CD4-positive, alpha-beta T cell (primary cell): ENCODE measurements at regions of chr17 and their contacts with region 1.

Region 1: DNA sequence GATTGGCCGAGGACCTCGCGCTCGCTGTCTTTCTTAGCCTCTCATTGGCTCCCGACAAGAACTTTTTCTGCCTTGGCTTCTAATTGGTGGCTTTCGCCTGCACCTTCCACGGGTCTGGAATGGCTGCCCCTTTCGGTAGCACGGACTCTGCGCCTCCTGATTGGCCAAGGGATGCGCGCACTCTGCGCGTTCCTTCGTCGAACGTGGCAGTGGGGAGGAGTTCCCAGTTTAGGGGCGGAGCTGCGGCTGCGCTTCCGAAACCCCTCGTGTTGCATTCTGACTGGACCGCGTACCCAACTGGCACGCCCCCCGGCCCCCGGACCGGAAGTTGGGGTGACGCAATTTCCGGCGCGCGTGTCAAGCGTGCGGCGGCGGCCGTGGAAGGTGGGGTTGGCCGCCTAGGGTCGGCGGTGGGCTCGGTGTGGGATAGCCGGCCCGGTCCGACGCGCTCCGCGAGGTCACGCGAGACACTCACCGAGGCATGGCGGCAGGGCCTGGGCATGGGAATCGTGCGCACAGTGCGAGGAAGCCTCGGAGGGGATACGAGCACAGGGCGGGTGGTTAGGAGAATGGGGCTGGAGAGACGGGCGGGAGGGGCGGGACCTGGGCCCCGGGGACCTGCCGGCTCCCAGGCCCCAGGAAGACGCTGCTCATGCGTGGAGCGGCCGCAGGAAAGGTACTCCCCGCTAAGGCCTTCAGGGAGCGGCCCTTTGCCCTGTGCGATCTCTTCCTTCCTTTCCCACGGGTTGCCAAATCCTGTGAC is 602 bp upstream of the P4HB start:
- DNase-seq: peak; percentile 98 to 100 (median 99)
- ATAC-seq: peak; percentile 86
- H3K4me3 ChIP-seq: peak overlapping the region; percentile 63
- H3K4me3 Mint-ChIP-seq: peak overlapping the region; percentile 94
- H3K27ac ChIP-seq: peak overlapping the region; percentile 93 to 95
- H3K27ac Mint-ChIP-seq: peak overlapping the region; percentile 96
- H3K4me1 ChIP-seq: peaks cover 60% of the 10 kb centered on the region
- H3K4me1 Mint-ChIP-seq: peaks cover 29% of the 10 kb centered on the region
- H3K27me3 ChIP-seq: no peaks in the 10 kb centered on the region
- H3K27me3 Mint-ChIP-seq: no peaks in the 10 kb centered on the region
- CTCF ChIP-seq: no peak

Region 2: GRCh38 chr17:81512560-81513371 is 348.2 kb before region 1 on chr17 and contains the start of gene ACTG1:
- CTCF ChIA-PET with region 1: no interaction called
- POLR2A ChIA-PET with region 1: interaction called, 4 read pairs
- intact Hi-C with region 1: loop called in 1 of 2 experiments (anchors 10 kb)
- DNase-seq: peak; percentile 84 to 96 (median 92)
- ATAC-seq: peak; percentile 66
- H3K4me3 ChIP-seq: peak within 1 kb of the TSS; percentile 98
- H3K4me3 Mint-ChIP-seq: peak within 1 kb of the TSS; percentile 99
- H3K27ac ChIP-seq: peak within 1 kb of the TSS; percentile 72 to 87
- H3K27ac Mint-ChIP-seq: peak within 1 kb of the TSS; percentile 90
- H3K4me1 ChIP-seq: peaks cover 72% of the 10 kb centered on the region
- H3K4me1 Mint-ChIP-seq: peaks cover 57% of the 10 kb centered on the region
- H3K27me3 ChIP-seq: no peaks in the 10 kb centered on the region
- H3K27me3 Mint-ChIP-seq: no peaks in the 10 kb centered on the region
- CTCF ChIP-seq: no peak
- total RNA-seq, gene ACTG1: 1,296 to 1,318 TPM

Region 3: GRCh38 chr17:81683584-81684237 is 177.2 kb before region 1 on chr17 and contains the starts of genes ARL16 and HGS:
- CTCF ChIA-PET with region 1: no interaction called
- POLR2A ChIA-PET with region 1: interaction called, 7 read pairs
- intact Hi-C with region 1: loop called (anchors 5 kb)
- DNase-seq: peak; percentile 94 to 99 (median 96)
- ATAC-seq: peak; percentile 99
- H3K4me3 ChIP-seq: peak within 1 kb of the TSS; percentile 98
- H3K4me3 Mint-ChIP-seq: peak within 1 kb of the TSS; percentile 100
- H3K27ac ChIP-seq: peak within 1 kb of the TSS; percentile 67 to 69
- H3K27ac Mint-ChIP-seq: peak within 1 kb of the TSS; percentile 81
- H3K4me1 ChIP-seq: peaks cover 51% of the 10 kb centered on the region
- H3K4me1 Mint-ChIP-seq: peaks cover 24% of the 10 kb centered on the region
- H3K27me3 ChIP-seq: no peaks in the 10 kb centered on the region
- H3K27me3 Mint-ChIP-seq: no peaks in the 10 kb centered on the region
- CTCF ChIP-seq: no peak
- total RNA-seq, gene ARL16: 35.7 to 38.5 TPM
- total RNA-seq, gene HGS: 118 to 127 TPM

Region 4: DNA sequence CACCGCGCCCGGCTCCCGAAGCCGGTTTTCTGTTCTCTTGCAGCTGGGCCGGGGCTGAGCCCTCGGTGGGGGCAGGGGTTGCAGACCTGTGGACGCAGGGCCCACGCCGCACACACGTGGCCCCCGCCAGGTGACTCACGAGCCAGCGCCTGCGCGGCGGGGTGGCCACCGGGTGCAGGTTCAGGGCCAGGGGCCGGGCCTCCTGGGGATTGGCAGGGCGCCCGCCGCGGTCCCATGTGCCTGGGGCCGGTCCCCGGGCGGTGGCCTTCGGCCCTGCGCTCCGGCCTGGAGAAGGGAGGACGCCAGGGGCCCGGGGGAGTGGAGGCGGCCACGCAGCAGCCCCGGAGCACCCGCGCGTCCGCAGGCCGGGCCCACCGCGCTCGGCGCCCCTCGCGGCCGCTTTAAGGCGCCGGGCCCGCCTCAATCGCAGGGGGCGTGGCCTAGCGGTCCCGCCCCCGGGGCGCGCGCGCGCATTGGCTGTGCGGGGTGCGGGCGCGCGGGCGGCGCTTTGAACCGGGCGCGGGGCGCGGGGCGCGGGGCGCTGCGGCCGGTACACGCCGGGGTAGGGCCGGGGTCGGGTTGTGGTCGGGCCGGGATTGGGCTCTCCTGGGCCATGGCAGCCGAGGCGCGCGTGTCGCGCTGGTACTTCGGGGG is 149.0 kb before region 1 on chr17 and contains the start of gene SLC25A10:
- CTCF ChIA-PET with region 1: no interaction called
- POLR2A ChIA-PET with region 1: no interaction called
- intact Hi-C with region 1: loop called in 1 of 2 experiments (anchors 2 kb)
- DNase-seq: peak; percentile 53 to 91 (median 72)
- ATAC-seq: peak; percentile 80
- H3K4me3 ChIP-seq: peak within 1 kb of the TSS; percentile 49
- H3K4me3 Mint-ChIP-seq: peak within 1 kb of the TSS; percentile 90
- H3K27ac ChIP-seq: no peak within 1 kb of the TSS
- H3K27ac Mint-ChIP-seq: peak within 1 kb of the TSS; percentile 77
- H3K4me1 ChIP-seq: peaks cover 31% of the 10 kb centered on the region
- H3K4me1 Mint-ChIP-seq: peaks cover 27% of the 10 kb centered on the region
- H3K27me3 ChIP-seq: no peaks in the 10 kb centered on the region
- H3K27me3 Mint-ChIP-seq: no peaks in the 10 kb centered on the region
- CTCF ChIP-seq: peak; percentile 17
- total RNA-seq, gene SLC25A10: 4.6 TPM

Region 5: DNA sequence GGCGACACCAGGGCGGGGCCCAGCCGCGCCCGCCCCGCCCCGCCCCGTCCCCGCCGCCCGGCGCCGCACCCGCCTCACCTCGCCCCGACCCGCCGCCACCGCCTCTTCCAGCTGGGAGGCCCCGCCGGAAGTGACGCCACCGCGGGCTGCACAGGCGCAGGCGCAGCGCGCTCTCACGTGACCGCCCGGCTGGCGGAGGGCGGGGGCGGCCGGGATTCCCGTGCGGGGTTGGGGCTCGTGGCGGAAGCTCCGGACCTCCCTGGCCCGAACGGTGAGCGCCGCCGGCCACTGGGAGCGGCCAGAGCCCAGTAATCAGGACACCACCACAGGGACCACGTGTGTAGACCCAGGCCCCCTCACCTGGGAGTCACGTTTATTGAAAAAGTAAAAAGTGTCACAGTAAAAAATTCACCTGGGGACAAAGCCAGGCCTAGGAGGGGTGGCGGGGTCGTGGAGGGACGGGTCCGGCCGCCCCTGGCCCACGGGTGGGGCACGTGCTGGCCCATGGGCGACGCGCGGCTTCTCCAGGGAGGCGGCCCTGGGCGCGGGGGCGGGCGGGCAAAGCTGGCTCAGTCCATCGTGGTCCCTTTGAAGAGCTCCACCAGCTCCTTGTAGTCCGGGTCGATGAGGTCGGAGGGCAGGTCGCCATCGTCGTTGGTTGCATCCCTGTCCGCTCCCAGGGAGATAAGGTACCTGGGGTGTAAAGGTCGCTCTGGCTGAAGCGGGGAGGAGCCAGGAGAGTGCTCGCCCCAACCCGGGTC is 27.6 kb before region 1 on chr17 and contains the start of gene MCRIP1:
- CTCF ChIA-PET with region 1: no interaction called
- POLR2A ChIA-PET with region 1: interaction called, 7 read pairs
- intact Hi-C with region 1: loop called (anchors 1 to 2 kb)
- DNase-seq: peak; percentile 82 to 98 (median 92)
- ATAC-seq: peak; percentile 78
- H3K4me3 ChIP-seq: peak within 1 kb of the TSS; percentile 80
- H3K4me3 Mint-ChIP-seq: peak within 1 kb of the TSS; percentile 93
- H3K27ac ChIP-seq: peak within 1 kb of the TSS; percentile 72 to 91
- H3K27ac Mint-ChIP-seq: peak within 1 kb of the TSS; percentile 88
- H3K4me1 ChIP-seq: peaks cover 28% of the 10 kb centered on the region
- H3K4me1 Mint-ChIP-seq: peaks cover 19% of the 10 kb centered on the region
- H3K27me3 ChIP-seq: no peaks in the 10 kb centered on the region
- H3K27me3 Mint-ChIP-seq: no peaks in the 10 kb centered on the region
- CTCF ChIP-seq: no peak
- total RNA-seq, gene MCRIP1: 36.9 to 37.7 TPM

Region 6: GRCh38 chr17:81911277-81911961 is 50.5 kb after region 1 on chr17 and contains the start of gene PCYT2:
- CTCF ChIA-PET with region 1: no interaction called
- POLR2A ChIA-PET with region 1: interaction called, 5 read pairs
- intact Hi-C with region 1: loop called in 1 of 2 experiments (anchors 1 kb)
- DNase-seq: peak; percentile 89 to 97 (median 93)
- ATAC-seq: peak; percentile 97
- H3K4me3 ChIP-seq: peak within 1 kb of the TSS; percentile 72
- H3K4me3 Mint-ChIP-seq: peak within 1 kb of the TSS; percentile 92
- H3K27ac ChIP-seq: peak within 1 kb of the TSS in 1 of 2 donors; percentile 29
- H3K27ac Mint-ChIP-seq: peak within 1 kb of the TSS; percentile 73
- H3K4me1 ChIP-seq: peaks cover 33% of the 10 kb centered on the region
- H3K4me1 Mint-ChIP-seq: peaks cover 11% of the 10 kb centered on the region
- H3K27me3 ChIP-seq: no peaks in the 10 kb centered on the region
- H3K27me3 Mint-ChIP-seq: no peaks in the 10 kb centered on the region
- CTCF ChIP-seq: no peak
- total RNA-seq, gene PCYT2: 18.7 to 18.9 TPM

Region 7: GRCh38 chr17:81917565-81918332 is 56.8 kb after region 1 on chr17 and contains the start of gene SIRT7:
- CTCF ChIA-PET with region 1: no interaction called
- POLR2A ChIA-PET with region 1: interaction called, 5 read pairs
- intact Hi-C with region 1: loop called in 1 of 2 experiments (anchors 1 kb)
- DNase-seq: peak; percentile 67 to 95 (median 83)
- ATAC-seq: peak; percentile 90
- H3K4me3 ChIP-seq: peak within 1 kb of the TSS; percentile 71
- H3K4me3 Mint-ChIP-seq: peak within 1 kb of the TSS; percentile 97
- H3K27ac ChIP-seq: peak within 1 kb of the TSS in 1 of 2 donors; percentile 23
- H3K27ac Mint-ChIP-seq: peak within 1 kb of the TSS; percentile 85
- H3K4me1 ChIP-seq: peaks cover 40% of the 10 kb centered on the region
- H3K4me1 Mint-ChIP-seq: peaks cover 26% of the 10 kb centered on the region
- H3K27me3 ChIP-seq: no peaks in the 10 kb centered on the region
- H3K27me3 Mint-ChIP-seq: no peaks in the 10 kb centered on the region
- CTCF ChIP-seq: no peak
- total RNA-seq, gene SIRT7: 56.7 to 57.5 TPM